Naive thymus-derived CD4-positive, alpha-beta T cell (primary cell): ENCODE measurements at regions of chr3 and their contacts with region 1.

Region 1: GRCh38 chr3:128680602-128681368 is 30.2 kb upstream of the RPN1 start:
- DNase-seq: peak; percentile 94 to 98 (median 95)
- ATAC-seq: peak; percentile 95
- H3K4me3 ChIP-seq: peak overlapping the region; percentile 91
- H3K4me3 Mint-ChIP-seq: peak overlapping the region; percentile 84 to 98 (median 94)
- H3K27ac ChIP-seq: peak overlapping the region; percentile 92
- H3K27ac Mint-ChIP-seq: peak overlapping the region; percentile 95 to 100 (median 99)
- H3K4me1 ChIP-seq: peaks cover 11 to 14% of the 10 kb centered on the region in 2 donors
- H3K4me1 Mint-ChIP-seq: peaks cover 17 to 50% (median 38%) of the 10 kb centered on the region in 7 donors
- H3K27me3 ChIP-seq: no peaks in the 10 kb centered on the region
- H3K27me3 Mint-ChIP-seq: no peaks in the 10 kb centered on the region

Region 2: DNA sequence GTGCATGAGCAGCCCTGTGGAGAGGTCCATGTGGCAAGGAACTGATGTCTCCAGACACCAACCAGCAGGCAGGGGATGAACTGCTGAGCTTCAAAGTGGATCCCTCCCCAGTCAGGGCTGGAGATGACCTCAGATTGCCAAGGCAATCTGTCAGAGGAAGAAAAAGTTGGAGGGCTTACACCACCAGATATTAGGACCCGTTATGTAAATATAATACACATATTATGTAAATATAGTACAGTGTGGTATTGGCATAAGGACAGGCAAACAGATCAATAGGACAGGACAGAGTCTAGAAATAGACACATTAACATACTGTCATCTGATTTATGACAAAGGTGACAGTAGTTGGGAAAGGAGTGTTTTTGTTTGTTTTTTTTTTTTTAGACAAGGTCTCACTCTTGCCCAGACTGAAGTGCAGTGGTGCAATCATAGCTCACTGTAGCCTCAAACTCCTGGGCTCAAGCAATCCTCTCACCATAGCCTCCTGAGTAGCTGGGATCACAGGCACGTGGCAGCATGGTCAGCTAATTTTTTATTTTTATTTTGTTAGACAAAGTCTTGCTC is 27.2 kb after region 1 on chr3:
- CTCF ChIA-PET with region 1: no interaction called
- POLR2A ChIA-PET with region 1: interaction called, 11 read pairs
- intact Hi-C with region 1: no loop called
- DNase-seq: no peak
- ATAC-seq: no peak
- H3K4me3 ChIP-seq: no peak overlapping the region
- H3K4me3 Mint-ChIP-seq: no peak overlapping the region
- H3K27ac ChIP-seq: no peak overlapping the region
- H3K27ac Mint-ChIP-seq: peak overlapping the region in 2 of 9 donors; percentile 22 to 86
- H3K4me1 ChIP-seq: no peaks in the 10 kb centered on the region
- H3K4me1 Mint-ChIP-seq: peaks cover 0 to 3% (median 0%) of the 10 kb centered on the region in 7 donors
- H3K27me3 ChIP-seq: no peaks in the 10 kb centered on the region
- H3K27me3 Mint-ChIP-seq: peaks cover 0 to 5% (median 0%) of the 10 kb centered on the region in 5 donors

Region 3: GRCh38 chr3:128725932-128726690 is 45.3 kb after region 1 on chr3 and contains the start of gene RAB7A:
- CTCF ChIA-PET with region 1: interaction called, 5 read pairs
- POLR2A ChIA-PET with region 1: interaction called, 75 read pairs
- intact Hi-C with region 1: loop called (anchors 1 kb)
- DNase-seq: peak; percentile 92 to 97 (median 97)
- ATAC-seq: peak; percentile 98
- H3K4me3 ChIP-seq: peak within 1 kb of the TSS; percentile 57
- H3K4me3 Mint-ChIP-seq: peak within 1 kb of the TSS; percentile 89 to 98 (median 96)
- H3K27ac ChIP-seq: peak within 1 kb of the TSS; percentile 100
- H3K27ac Mint-ChIP-seq: peak within 1 kb of the TSS; percentile 92 to 98 (median 95)
- H3K4me1 ChIP-seq: peaks cover 32 to 38% of the 10 kb centered on the region in 2 donors
- H3K4me1 Mint-ChIP-seq: peaks cover 49 to 64% (median 60%) of the 10 kb centered on the region in 7 donors
- H3K27me3 ChIP-seq: no peaks in the 10 kb centered on the region
- H3K27me3 Mint-ChIP-seq: peaks cover 0 to 3% (median 0%) of the 10 kb centered on the region in 5 donors
- total RNA-seq, gene RAB7A: 124 to 249 (median 172) TPM

Region 4: DNA sequence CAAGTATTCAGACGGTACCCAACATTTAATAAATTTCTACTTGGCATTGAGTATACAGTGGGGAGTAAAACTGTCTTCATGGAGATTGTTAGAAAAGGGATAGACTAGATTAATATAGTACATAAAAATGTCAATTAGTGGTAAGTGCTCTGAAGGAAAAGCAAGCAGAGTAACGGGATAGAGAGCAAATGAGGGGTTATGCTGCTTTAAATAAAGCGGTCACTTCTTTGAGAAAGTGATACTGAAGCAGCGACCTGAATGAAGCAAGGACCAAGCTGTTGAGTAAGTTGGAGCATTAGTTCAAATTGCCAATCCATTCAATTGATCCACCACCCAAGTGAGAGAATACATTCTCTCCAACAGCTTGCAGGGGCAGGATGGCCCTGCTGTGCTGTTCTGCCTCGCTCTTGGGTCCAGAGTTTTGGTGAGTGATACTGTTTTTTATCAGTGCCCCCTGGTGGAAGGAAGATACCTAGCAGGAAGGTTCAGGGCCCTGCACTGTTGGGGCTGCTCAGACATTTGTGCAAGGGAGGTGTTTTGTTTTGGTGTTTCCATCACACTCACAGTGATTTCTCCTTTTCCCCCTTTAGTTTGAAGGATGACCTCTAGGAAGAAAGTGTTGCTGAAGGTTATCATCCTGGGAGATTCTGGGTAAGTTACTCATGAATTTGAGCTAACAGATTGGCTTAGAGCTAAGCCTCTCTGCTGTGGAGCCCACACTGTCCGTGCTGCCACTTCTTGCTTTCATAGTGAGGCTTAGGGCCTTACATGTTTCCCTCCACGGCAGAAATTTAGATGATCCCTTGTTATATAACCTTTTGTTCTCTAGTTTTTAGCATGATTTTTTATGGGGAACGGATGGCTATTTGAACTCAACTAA is 114.2 kb after region 1 on chr3:
- CTCF ChIA-PET with region 1: interaction called, 101 read pairs
- POLR2A ChIA-PET with region 1: interaction called, 79 read pairs
- intact Hi-C with region 1: loop called (anchors 1 kb)
- DNase-seq: peak; percentile 26 to 81 (median 76)
- ATAC-seq: peak; percentile 98
- H3K4me3 ChIP-seq: no peak overlapping the region
- H3K4me3 Mint-ChIP-seq: peak overlapping the region; percentile 26 to 78 (median 51)
- H3K27ac ChIP-seq: peak overlapping the region; percentile 54
- H3K27ac Mint-ChIP-seq: peak overlapping the region; percentile 71 to 96 (median 85)
- H3K4me1 ChIP-seq: peaks cover 11 to 54% of the 10 kb centered on the region in 2 donors
- H3K4me1 Mint-ChIP-seq: peaks cover 32 to 74% (median 66%) of the 10 kb centered on the region in 7 donors
- H3K27me3 ChIP-seq: no peaks in the 10 kb centered on the region
- H3K27me3 Mint-ChIP-seq: no peaks in the 10 kb centered on the region

Region 5: DNA sequence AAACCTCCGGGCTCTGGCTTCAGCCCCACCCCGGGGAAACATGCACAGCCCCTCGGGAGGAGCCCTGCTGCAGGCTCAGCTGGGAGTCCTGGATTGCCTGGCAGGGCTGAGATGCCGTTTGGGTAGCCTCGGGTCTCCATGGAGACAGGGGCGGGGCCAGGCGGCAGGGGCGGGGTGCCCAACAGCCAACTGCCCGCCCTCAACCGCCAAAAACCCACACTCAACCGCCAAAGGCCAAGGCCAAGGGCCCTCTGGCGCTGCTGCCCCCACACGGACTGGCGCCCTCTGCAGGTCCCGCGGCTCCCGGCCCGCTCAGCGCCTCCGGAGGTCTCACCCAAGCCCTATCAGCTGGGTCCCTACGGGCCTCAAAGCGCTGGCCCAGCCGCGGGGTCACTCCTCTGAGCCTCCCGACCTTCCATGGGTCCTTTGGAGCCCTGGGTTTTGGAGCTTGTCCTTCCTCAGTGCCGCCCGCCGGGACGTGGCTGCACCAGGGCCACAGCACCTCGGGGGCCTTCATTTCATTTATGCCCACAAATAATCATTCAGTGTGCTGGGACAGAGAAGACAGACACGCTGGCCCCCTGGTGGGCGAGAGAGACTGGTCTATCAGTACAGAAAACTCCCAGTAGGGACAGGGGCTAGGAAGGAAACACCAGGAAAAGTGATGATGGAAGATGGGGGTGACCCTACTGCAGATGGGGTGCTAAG is 165.1 kb after region 1 on chr3:
- CTCF ChIA-PET with region 1: interaction called, 31 read pairs
- POLR2A ChIA-PET with region 1: interaction called, 23 read pairs
- intact Hi-C with region 1: loop called (anchors 1 kb)
- DNase-seq: peak; percentile 61 to 87 (median 74)
- ATAC-seq: peak; percentile 85
- H3K4me3 ChIP-seq: peak overlapping the region; percentile 65
- H3K4me3 Mint-ChIP-seq: peak overlapping the region; percentile 65 to 88 (median 82)
- H3K27ac ChIP-seq: peak overlapping the region; percentile 64
- H3K27ac Mint-ChIP-seq: peak overlapping the region; percentile 64 to 93 (median 81)
- H3K4me1 ChIP-seq: peaks cover 0 to 14% of the 10 kb centered on the region in 2 donors
- H3K4me1 Mint-ChIP-seq: peaks cover 11 to 22% (median 17%) of the 10 kb centered on the region in 7 donors
- H3K27me3 ChIP-seq: no peaks in the 10 kb centered on the region
- H3K27me3 Mint-ChIP-seq: peaks cover 0 to 2% (median 0%) of the 10 kb centered on the region in 5 donors

Region 6: DNA sequence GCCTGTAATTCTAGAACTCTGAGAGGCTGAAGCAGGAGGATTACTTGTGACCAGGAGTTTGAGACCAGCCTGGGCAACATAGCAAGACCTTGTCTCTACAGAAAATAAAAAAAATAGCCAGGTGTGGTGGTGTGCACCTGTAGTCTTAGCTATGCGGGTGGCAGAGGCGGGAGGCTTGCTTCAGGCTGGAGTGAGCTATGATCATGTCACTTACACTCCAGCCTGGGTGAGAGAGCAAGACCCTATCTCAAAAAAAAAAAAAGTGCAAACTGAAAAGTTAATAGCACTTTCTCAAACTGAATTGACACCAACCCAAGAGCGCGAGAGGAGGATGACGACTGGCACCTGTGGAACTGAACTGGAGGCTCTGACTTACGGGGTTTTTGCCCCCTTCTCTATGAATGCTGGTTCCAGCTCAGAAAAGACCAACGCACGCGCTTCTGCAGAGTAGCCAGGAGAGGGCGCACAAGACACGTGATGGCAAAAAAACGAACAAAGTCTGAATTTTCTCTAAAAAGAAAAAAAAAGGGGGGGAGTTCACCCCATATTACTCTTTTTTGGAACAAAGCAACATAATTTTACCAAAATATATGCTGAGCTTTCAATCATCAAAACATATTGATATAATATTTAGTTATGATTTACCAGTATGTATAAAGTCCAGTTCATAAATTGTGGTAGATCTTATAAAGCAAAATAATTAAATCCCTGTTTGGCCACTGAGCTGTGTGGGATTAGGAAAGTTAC is 289.4 kb after region 1 on chr3:
- CTCF ChIA-PET with region 1: no interaction called
- POLR2A ChIA-PET with region 1: no interaction called
- intact Hi-C with region 1: no loop called
- DNase-seq: peak; percentile 43 to 75 (median 64)
- ATAC-seq: peak; percentile 89
- H3K4me3 ChIP-seq: no peak overlapping the region
- H3K4me3 Mint-ChIP-seq: peak overlapping the region in 1 of 10 donors; percentile 11
- H3K27ac ChIP-seq: no peak overlapping the region
- H3K27ac Mint-ChIP-seq: no peak overlapping the region
- H3K4me1 ChIP-seq: no peaks in the 10 kb centered on the region
- H3K4me1 Mint-ChIP-seq: peaks cover 0 to 7% (median 6%) of the 10 kb centered on the region in 7 donors
- H3K27me3 ChIP-seq: no peaks in the 10 kb centered on the region
- H3K27me3 Mint-ChIP-seq: peaks cover 0 to 5% (median 0%) of the 10 kb centered on the region in 5 donors

Region 7: DNA sequence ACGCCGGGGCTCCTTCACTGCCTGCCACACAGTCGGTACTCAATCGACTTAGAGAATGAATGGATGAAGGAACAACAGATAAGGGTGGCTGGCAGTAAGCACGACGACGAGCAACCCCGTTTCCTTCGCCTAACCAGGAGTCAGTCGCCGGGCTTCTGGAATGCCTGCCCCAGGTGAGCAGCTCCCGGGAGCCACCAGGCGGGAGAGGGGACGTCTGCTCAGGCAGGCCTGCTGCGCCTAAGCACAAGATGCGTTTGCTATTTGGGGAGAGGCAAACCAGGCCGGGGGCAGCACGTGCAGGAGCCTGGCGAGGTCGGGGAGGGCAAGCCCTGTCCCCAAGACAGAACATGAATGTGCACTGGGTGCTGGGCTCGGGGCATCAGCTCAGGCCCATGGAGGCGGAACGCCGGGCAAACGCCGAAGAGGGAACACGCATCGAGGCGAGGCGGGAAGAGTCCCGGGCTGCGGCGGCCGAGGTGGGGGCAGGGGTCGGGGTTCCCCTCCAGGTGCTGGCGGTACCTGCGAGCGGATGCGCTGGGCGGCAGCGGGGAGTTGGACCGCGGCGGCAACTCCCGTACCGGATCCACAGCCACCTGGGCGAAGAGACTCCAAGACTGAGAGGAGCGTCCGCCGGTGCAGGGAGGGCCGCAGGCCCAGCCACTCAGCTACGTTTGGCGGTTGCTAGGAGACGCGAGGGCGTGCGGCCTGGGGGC is 312.8 kb after region 1 on chr3 and contains the start of gene CFAP92:
- CTCF ChIA-PET with region 1: no interaction called
- POLR2A ChIA-PET with region 1: no interaction called
- intact Hi-C with region 1: loop called in 1 of 2 experiments (anchors 2 kb)
- DNase-seq: peak; percentile 84 to 90 (median 89)
- ATAC-seq: peak; percentile 99
- H3K4me3 ChIP-seq: peak within 1 kb of the TSS; percentile 57
- H3K4me3 Mint-ChIP-seq: peak within 1 kb of the TSS; percentile 71 to 87 (median 82)
- H3K27ac ChIP-seq: peak within 1 kb of the TSS; percentile 61
- H3K27ac Mint-ChIP-seq: peak within 1 kb of the TSS; percentile 56 to 91 (median 73)
- H3K4me1 ChIP-seq: peaks cover 6 to 28% of the 10 kb centered on the region in 2 donors
- H3K4me1 Mint-ChIP-seq: peaks cover 15 to 45% (median 34%) of the 10 kb centered on the region in 7 donors
- H3K27me3 ChIP-seq: no peaks in the 10 kb centered on the region
- H3K27me3 Mint-ChIP-seq: peaks cover 0 to 3% (median 0%) of the 10 kb centered on the region in 5 donors
- total RNA-seq, gene CFAP92: 0.10 to 1.4 (median 0.46) TPM